ENCODE measurements at regions of chr4 and their contacts with region 1.

Region 1: DNA sequence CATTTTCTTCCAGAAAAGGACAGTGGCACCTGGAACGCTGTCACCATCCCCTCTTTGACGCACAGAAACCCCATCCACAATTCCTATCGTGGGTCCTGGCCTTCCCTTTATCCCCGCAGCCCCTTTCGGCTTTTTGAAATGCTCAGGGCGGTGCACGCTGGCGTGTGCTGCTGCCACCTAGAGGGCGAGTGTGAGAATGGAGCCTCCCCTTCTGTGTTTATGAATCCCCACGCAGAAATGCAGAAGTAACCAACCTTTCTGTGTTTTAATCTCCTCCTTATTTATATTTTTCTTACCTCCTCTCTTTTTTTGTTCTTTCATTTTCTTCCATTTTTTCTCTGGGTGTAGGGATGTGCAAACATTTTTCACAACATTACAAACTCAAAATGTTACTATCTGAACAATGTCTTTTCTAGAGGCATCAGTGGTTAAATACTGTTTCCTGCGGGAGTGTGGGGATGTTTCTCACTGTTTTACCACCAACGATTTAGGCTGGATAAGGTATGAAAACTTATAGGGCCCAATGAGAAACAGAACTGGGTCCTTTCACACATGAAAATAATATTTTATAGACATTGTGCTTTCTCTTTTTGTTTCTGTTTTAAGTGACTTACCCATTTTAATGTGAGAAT is 50.0 kb downstream of the TMA16 start:
- DNase-seq: peak; percentile 72
- H3K4me3 Mint-ChIP-seq: no peak overlapping the region
- H3K27ac Mint-ChIP-seq: no peak overlapping the region
- H3K4me1 Mint-ChIP-seq: peaks cover 5% of the 10 kb centered on the region
- H3K27me3 Mint-ChIP-seq: no peaks in the 10 kb centered on the region

Region 2: DNA sequence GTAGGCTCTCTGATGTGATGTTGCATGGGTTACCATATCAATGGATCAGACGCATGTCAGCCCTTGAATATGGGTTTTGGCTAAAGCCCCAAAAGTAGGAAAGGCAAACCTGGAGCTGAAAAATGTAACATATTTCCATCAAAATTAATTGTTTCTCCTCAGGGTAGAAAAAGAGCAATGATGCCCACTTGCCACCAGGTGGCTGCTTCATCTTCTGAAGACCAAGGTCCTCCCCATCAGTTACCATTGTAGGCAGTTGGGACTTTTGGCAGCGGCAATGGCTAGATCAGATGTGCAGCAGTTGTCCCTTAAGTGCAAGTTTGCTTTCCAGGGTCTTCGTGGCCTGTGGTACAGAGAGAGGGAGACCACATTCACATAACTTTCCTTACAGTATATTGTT is 496.1 kb before region 1 on chr4:
- CTCF ChIA-PET with region 1: no interaction called
- intact Hi-C with region 1: loop called (anchors 1 kb)
- DNase-seq: peak; percentile 23
- H3K4me3 Mint-ChIP-seq: no peak overlapping the region
- H3K27ac Mint-ChIP-seq: no peak overlapping the region
- H3K4me1 Mint-ChIP-seq: no peaks in the 10 kb centered on the region
- H3K27me3 Mint-ChIP-seq: peaks cover 16% of the 10 kb centered on the region

Region 3: GRCh38 chr4:163166041-163166579 is 378.4 kb before region 1 on chr4:
- CTCF ChIA-PET with region 1: no interaction called
- intact Hi-C with region 1: loop called (anchors 2 kb)
- DNase-seq: peak; percentile 56
- H3K4me3 Mint-ChIP-seq: peak overlapping the region; percentile 86
- H3K27ac Mint-ChIP-seq: peak overlapping the region; percentile 93
- H3K4me1 Mint-ChIP-seq: peaks cover 46% of the 10 kb centered on the region
- H3K27me3 Mint-ChIP-seq: no peaks in the 10 kb centered on the region

Region 4: GRCh38 chr4:163332500-163333406 is 211.8 kb before region 1 on chr4 and contains the start of gene NPY1R:
- CTCF ChIA-PET with region 1: interaction called, 3 read pairs
- intact Hi-C with region 1: loop called (anchors 2 kb)
- DNase-seq: peak; percentile 65
- H3K4me3 Mint-ChIP-seq: peak within 1 kb of the TSS; percentile 55
- H3K27ac Mint-ChIP-seq: no peak within 1 kb of the TSS
- H3K4me1 Mint-ChIP-seq: peaks cover 14% of the 10 kb centered on the region
- H3K27me3 Mint-ChIP-seq: peaks cover 43% of the 10 kb centered on the region
- total RNA-seq, gene NPY1R: not detected

Region 5: DNA sequence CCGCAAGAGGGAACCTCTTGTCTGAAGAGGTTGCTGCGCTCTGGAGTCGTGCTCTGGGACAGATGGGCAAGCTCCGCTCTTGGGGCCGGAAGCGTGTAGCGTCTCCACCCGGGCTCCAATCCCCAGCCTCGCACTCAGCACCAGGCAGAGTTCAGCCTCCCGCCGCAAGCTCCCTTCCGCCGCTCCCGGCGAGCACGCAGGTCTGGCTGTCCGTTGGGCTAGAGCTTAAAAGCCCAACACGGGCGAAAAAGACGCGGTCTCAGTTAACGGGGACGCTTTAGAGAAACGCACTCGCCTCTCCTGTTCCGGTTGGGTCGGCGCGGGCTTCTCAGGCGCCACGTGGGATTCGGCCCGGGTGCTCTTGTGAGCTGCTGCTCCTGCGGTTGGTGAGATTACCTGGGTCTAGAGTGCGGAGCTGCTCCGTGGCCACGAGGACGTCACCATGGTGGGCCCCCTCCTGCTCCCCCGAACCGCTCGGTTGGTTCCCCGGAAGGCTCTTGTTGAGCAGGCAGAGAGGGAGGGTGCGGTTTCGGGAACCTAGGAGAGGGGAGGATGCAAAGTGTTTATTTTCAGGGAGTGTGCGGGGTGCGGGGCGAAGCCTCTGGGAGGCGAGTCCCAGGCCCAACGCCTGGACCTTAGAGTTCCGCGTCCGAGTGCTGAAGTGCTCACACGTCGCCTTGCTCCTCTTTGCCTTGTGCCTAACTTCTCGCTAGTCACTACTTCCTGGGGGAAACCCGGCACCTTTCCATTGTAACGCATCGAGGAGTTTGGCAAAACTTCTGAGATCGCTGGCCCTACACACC is 50.0 kb before region 1 on chr4 and contains the start of gene TMA16:
- CTCF ChIA-PET with region 1: interaction called, 29 read pairs
- intact Hi-C with region 1: loop called (anchors 2 kb)
- DNase-seq: peak; percentile 88
- H3K4me3 Mint-ChIP-seq: peak within 1 kb of the TSS; percentile 83
- H3K27ac Mint-ChIP-seq: peak within 1 kb of the TSS; percentile 99
- H3K4me1 Mint-ChIP-seq: peaks cover 26% of the 10 kb centered on the region
- H3K27me3 Mint-ChIP-seq: no peaks in the 10 kb centered on the region
- total RNA-seq, gene TMA16: 45.1 to 46.7 TPM

Region 6: GRCh38 chr4:163681208-163681821 is 136.8 kb after region 1 on chr4:
- CTCF ChIA-PET with region 1: interaction called, 166 read pairs
- intact Hi-C with region 1: no loop called
- DNase-seq: peak; percentile 30
- H3K4me3 Mint-ChIP-seq: no peak overlapping the region
- H3K27ac Mint-ChIP-seq: no peak overlapping the region
- H3K4me1 Mint-ChIP-seq: no peaks in the 10 kb centered on the region
- H3K27me3 Mint-ChIP-seq: no peaks in the 10 kb centered on the region